Breast epithelium (tissue), 4 donors: ENCODE measurements at regions of chr17 and their contacts with region 1.

Region 1: GRCh38 chr17:45108595-45109521 is 23.5 kb downstream of the PLCD3 start:
- DNase-seq: no peak
- H3K4me3 ChIP-seq: no peak overlapping the region
- H3K27ac ChIP-seq: peak overlapping the region; percentile 3 to 22
- H3K4me1 ChIP-seq: peaks cover 0 to 9% of the 10 kb centered on the region in 2 donors
- H3K27me3 ChIP-seq: no peaks in the 10 kb centered on the region
- CTCF ChIP-seq: no peak
- POLR2A ChIP-seq: no peak

Region 2: DNA sequence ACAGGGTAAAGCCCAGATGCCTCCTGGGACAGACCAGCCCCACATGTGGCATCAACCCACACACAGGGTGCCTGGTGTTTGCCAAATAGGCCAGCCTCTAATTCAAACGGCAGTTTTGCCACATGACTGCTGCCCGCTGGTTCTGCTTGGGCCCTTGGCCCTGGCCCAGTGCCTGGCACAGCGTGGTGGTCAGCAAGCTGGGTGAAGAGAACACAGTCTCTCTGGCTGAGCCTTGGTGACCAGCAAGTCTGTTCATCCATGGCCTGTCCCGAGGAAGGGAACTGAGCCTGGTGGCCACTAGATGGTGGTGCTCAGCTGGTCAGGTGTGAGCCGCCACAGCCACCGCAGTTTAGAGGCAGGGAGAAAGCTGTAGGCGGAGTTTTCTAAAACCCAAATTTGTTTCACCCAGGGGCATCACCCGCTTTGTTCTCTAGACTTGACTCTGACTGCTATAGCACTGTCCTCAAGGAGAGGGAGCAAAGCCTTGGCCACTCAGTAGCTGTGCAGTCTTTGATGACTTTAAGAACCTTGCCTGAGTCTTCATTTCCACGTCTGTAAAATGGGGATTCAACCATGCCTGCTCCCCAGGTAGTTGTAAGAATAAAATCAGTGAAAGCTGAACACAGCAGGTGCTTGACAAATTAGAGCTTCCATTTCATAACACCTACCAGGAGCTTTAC is 188.8 kb before region 1 on chr17:
- intact Hi-C with region 1: loop called (anchors 10 kb)
- DNase-seq: peak; percentile 81 to 82
- H3K4me3 ChIP-seq: no peak overlapping the region
- H3K27ac ChIP-seq: peak overlapping the region; percentile 22 to 30
- H3K4me1 ChIP-seq: peaks cover 0 to 10% of the 10 kb centered on the region in 2 donors
- H3K27me3 ChIP-seq: no peaks in the 10 kb centered on the region
- CTCF ChIP-seq: peak; percentile 52 to 95 (median 84)
- POLR2A ChIP-seq: no peak

Region 3: GRCh38 chr17:45060797-45061605 is 47.9 kb before region 1 on chr17 and contains the start of gene NMT1:
- intact Hi-C with region 1: no loop called
- DNase-seq: peak; percentile 96 to 99
- H3K4me3 ChIP-seq: peak within 1 kb of the TSS; percentile 68 to 83 (median 77)
- H3K27ac ChIP-seq: peak within 1 kb of the TSS; percentile 86 to 91
- H3K4me1 ChIP-seq: peaks cover 0 to 10% of the 10 kb centered on the region in 2 donors
- H3K27me3 ChIP-seq: no peaks in the 10 kb centered on the region
- CTCF ChIP-seq: peak; percentile 19 to 39 (median 27)
- POLR2A ChIP-seq: peak; percentile 92
- total RNA-seq, gene NMT1: 81.9 to 130 (median 84.0) TPM

Region 4: GRCh38 chr17:45148183-45149036 is 39.6 kb after region 1 on chr17 and contains the start of gene HEXIM1:
- intact Hi-C with region 1: no loop called
- DNase-seq: peak; percentile 100
- H3K4me3 ChIP-seq: peak within 1 kb of the TSS; percentile 66 to 83 (median 71)
- H3K27ac ChIP-seq: peak within 1 kb of the TSS; percentile 99 to 100
- H3K4me1 ChIP-seq: peaks cover 9 to 19% of the 10 kb centered on the region in 2 donors
- H3K27me3 ChIP-seq: no peaks in the 10 kb centered on the region
- CTCF ChIP-seq: no peak
- POLR2A ChIP-seq: peak; percentile 100
- total RNA-seq, gene HEXIM1: 21.3 to 35.6 (median 33.4) TPM